ENCODE measurements at regions of chr9 and their contacts with region 1.

Region 1: GRCh38 chr9:108468402-108468801 is 387.4 kb downstream of the ACTL7B start:
- DNase-seq: no peak
- H3K4me3 ChIP-seq: no peak overlapping the region
- CTCF ChIP-seq: peak; percentile 23

Region 2: DNA sequence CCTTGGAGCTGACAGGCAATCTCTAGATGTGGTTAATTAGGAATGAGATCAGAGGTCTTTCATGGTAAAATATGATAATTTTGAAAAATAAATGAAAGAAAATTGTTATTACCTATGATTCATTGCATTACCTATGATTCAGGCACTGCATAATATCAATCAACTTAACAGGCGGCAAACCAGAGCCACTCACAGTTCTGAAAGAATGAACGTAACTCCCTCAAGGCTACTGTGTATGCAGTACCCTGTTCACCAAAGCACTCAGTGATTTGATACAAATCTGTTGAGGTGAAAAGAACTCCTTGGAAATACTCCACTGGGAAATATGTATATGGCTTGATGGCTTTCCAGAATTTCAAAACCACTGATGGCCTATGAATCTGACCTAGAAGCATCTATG is 11.5 kb before region 1 on chr9:
- CTCF ChIA-PET with region 1: interaction called, 19 read pairs
- POLR2A ChIA-PET with region 1: no interaction called
- DNase-seq: no peak
- H3K4me3 ChIP-seq: no peak overlapping the region
- CTCF ChIP-seq: no peak

Region 3: GRCh38 chr9:108478431-108478837 is 10.0 kb after region 1 on chr9:
- CTCF ChIA-PET with region 1: interaction called, 16 read pairs
- POLR2A ChIA-PET with region 1: no interaction called
- DNase-seq: peak; percentile 37
- H3K4me3 ChIP-seq: peak overlapping the region; percentile 29
- CTCF ChIP-seq: no peak

Region 4: GRCh38 chr9:108634204-108634603 is 165.8 kb after region 1 on chr9:
- CTCF ChIA-PET with region 1: no interaction called
- POLR2A ChIA-PET with region 1: no interaction called
- DNase-seq: no peak
- H3K4me3 ChIP-seq: no peak overlapping the region
- CTCF ChIP-seq: no peak

Region 5: GRCh38 chr9:108727580-108728111 is 259.2 kb after region 1 on chr9:
- CTCF ChIA-PET with region 1: no interaction called
- POLR2A ChIA-PET with region 1: no interaction called
- DNase-seq: no peak
- H3K4me3 ChIP-seq: no peak overlapping the region
- CTCF ChIP-seq: no peak

Measured in AG04449 (cell line).